Activated CD8-positive, alpha-beta T cell treated with anti-CD3 and anti-CD28 coated beads, Interleukin-2, amount 10 ng/mL, durations not matched to agents 7 days and 5 days (primary cell): ENCODE measurements at regions of chr19 and their contacts with region 1.

Region 1: GRCh38 chr19:1901940-1902441 is 3.2 kb upstream of the ADAT3 start:
- DNase-seq: no peak
- ATAC-seq: no peak
- H3K4me3 Mint-ChIP-seq: no peak overlapping the region
- H3K27ac Mint-ChIP-seq: no peak overlapping the region
- H3K4me1 Mint-ChIP-seq: peaks cover 42% of the 10 kb centered on the region
- H3K27me3 Mint-ChIP-seq: no peaks in the 10 kb centered on the region

Region 2: DNA sequence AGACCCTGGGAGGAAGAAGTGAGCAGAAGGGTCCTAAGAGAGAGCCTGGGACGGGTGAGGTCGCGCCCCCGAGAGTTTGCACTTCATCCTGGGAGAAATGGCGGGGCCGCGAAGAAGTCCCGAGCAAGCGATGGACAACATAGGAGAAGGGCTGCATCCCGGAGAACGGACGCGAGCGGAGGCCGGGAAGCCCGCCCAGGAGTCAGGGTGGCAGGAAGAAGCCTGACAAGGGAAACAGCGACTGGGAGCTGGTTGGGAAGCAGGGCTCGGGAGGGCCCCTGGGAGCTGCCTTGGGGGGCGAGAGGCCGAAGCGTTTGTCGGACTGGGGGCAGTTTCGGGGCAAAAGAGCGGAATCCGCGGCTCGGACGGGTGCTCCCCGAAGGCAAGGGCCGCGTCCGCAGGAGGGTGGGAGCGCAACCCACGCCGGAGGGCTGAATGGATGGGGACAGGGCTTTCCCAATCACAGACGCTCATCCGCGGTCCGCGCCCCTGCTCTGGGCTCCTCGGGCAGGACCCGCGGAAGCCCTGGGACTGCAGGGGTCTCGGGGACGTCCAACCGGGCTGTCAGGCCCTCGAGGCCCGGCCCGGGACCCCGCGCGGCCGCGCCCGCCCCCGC is 17.2 kb before region 1 on chr19:
- CTCF ChIA-PET with region 1: interaction called, 9 read pairs
- POLR2A ChIA-PET with region 1: interaction called, 26 read pairs
- DNase-seq: no peak
- ATAC-seq: peak; percentile 9
- H3K4me3 Mint-ChIP-seq: peak overlapping the region; percentile 93
- H3K27ac Mint-ChIP-seq: peak overlapping the region; percentile 95
- H3K4me1 Mint-ChIP-seq: peaks cover 50% of the 10 kb centered on the region
- H3K27me3 Mint-ChIP-seq: no peaks in the 10 kb centered on the region